ENCODE measurements at regions of chr13 and their contacts with region 1.

Region 1: GRCh38 chr13:111474136-111475002 is 153.9 kb downstream of the TEX29 start:
- DNase-seq: peak; percentile 75
- H3K4me3 ChIP-seq: no peak overlapping the region; a peak in 1 of 4 replicates
- H3K27ac ChIP-seq: no peak overlapping the region
- H3K4me1 ChIP-seq: no peaks in the 10 kb centered on the region
- H3K27me3 ChIP-seq: peaks cover 46% of the 10 kb centered on the region
- CTCF ChIP-seq: peak; percentile 70
- EP300 ChIP-seq: no peak
- RAD21 ChIP-seq: peak; percentile 81

Region 2: GRCh38 chr13:111437856-111438547 is 36.4 kb before region 1 on chr13:
- CTCF ChIA-PET with region 1: interaction called, 11 read pairs
- POLR2A ChIA-PET with region 1: no interaction called
- DNase-seq: no peak
- H3K4me3 ChIP-seq: no peak overlapping the region
- H3K27ac ChIP-seq: no peak overlapping the region
- H3K4me1 ChIP-seq: no peaks in the 10 kb centered on the region
- H3K27me3 ChIP-seq: no peaks in the 10 kb centered on the region; the same call in 1 of the 2 replicates
- CTCF ChIP-seq: no peak
- EP300 ChIP-seq: no peak
- RAD21 ChIP-seq: no peak

Region 3: GRCh38 chr13:111461445-111462149 is 12.8 kb before region 1 on chr13:
- CTCF ChIA-PET with region 1: interaction called, 11 read pairs
- POLR2A ChIA-PET with region 1: no interaction called
- DNase-seq: no peak
- H3K4me3 ChIP-seq: no peak overlapping the region
- H3K27ac ChIP-seq: no peak overlapping the region
- H3K4me1 ChIP-seq: no peaks in the 10 kb centered on the region
- H3K27me3 ChIP-seq: peaks cover 42% of the 10 kb centered on the region
- CTCF ChIP-seq: no peak
- EP300 ChIP-seq: no peak
- RAD21 ChIP-seq: no peak

Region 4: DNA sequence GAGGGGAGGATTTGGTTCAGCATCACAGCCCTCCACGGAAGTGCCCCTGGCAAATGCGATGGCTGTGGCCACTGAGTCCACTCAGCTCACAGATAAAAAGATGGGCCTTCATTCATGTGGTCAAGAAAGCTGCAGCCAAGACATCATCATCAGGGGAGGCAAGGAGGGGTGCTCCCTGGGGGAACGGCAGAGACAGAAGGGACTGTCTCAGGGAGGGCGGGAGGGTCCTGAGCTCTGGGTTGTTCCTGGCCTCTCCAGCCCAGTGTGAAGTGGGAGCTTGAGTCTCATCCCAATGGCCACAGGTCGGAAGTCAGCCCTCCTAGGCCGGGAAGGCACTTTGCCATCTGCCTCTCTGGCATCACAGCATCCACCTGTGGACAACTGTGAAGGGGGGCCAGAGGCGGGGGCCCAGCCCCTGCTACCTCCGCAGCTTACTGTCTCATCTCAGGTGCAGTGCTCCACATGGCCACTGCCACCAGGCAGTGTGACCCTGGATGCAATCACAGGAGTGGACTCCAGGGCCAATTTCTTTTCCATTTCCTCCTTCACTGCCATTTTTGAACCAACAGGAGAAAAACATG is 454.8 kb after region 1 on chr13:
- CTCF ChIA-PET with region 1: no interaction called
- POLR2A ChIA-PET with region 1: no interaction called
- DNase-seq: no peak
- H3K4me3 ChIP-seq: no peak overlapping the region
- H3K27ac ChIP-seq: no peak overlapping the region
- H3K4me1 ChIP-seq: no peaks in the 10 kb centered on the region
- H3K27me3 ChIP-seq: no peaks in the 10 kb centered on the region
- CTCF ChIP-seq: no peak
- EP300 ChIP-seq: no peak
- RAD21 ChIP-seq: no peak

Measured in SK-N-SH (cell line).